ENCODE measurements at regions of chr3 and their contacts with region 1.

Region 1: DNA sequence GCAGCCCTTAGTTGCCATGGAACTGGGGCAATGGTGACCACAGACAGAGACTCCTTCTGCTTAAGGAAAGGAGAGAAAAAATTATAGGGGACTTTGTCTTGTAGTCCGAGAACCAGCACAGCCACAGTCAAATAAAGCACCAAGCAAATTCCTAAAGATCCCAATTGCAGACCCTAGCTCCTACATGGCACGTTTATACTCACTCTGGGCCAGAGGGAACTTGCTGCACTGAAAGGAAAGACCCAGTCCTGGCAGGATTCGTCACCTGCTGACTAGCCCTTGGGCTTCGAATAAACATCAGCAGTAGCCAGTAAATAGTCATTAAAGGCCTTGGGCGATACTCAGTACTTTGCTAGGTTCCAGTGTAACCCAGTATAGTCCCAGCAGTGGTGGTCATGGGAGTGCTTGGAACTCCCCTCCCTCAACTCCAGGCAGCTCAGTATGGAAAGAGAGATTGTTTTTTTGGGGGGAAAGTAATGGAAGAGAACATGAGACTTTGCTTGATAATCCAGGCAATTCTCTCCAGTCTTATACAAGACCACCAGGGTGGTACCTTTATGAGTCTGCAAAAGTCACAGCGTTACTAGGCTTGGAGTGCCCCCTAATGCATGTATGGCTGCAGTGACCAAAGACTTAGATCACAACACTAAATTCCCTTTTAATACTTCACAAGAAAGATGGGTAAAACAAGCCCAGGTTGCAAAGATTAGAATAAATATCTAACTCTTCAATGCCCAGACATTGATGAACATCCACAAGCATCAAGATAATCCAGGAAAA is 66.4 kb upstream of the AGTR1 start:
- DNase-seq: peak; percentile 14
- H3K4me3 ChIP-seq: no peak overlapping the region
- H3K27ac ChIP-seq: no peak overlapping the region
- H3K4me1 ChIP-seq: no peaks in the 10 kb centered on the region
- H3K27me3 ChIP-seq: no peaks in the 10 kb centered on the region
- CTCF ChIP-seq: peak; percentile 15 to 28
- POLR2A ChIP-seq: no peak

Region 2: DNA sequence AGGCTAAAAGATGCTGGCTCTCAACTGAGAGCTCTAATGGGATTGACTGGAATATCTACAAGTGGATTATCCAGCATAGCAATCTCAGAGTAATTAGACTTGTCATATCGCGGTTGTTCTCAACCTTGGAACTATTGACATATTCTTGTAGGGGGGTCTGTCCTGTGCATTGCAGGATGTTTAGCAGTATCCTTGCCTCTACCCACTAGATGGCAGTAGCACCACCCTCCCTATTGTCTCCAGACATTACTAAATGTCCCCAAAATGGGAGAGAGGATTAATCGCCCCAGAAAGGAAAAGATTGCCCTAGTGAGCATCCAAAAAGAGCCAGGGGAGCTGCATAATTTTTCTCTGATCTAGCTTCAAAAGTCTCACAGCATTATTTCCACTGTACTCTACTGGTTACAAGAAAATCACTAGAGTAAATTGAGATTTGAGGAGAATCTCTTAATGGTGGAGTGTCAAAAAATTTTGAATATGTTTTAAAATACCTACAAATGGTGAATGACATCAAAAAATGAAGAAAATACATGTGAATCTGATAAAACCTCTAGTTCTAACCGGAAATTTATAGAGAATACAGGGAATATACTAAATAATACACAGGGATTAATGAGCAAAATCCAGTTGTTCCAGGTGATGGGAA is 321.8 kb before region 1 on chr3:
- CTCF ChIA-PET with region 1: interaction called, 3 read pairs
- POLR2A ChIA-PET with region 1: no interaction called
- dilution Hi-C with region 1: no loop called
- intact Hi-C with region 1: loop called (anchors 1 kb)
- DNase-seq: peak; percentile 36
- H3K4me3 ChIP-seq: no peak overlapping the region
- H3K27ac ChIP-seq: no peak overlapping the region
- H3K4me1 ChIP-seq: no peaks in the 10 kb centered on the region
- H3K27me3 ChIP-seq: no peaks in the 10 kb centered on the region
- CTCF ChIP-seq: peak; percentile 48 to 72
- POLR2A ChIP-seq: no peak

Region 3: DNA sequence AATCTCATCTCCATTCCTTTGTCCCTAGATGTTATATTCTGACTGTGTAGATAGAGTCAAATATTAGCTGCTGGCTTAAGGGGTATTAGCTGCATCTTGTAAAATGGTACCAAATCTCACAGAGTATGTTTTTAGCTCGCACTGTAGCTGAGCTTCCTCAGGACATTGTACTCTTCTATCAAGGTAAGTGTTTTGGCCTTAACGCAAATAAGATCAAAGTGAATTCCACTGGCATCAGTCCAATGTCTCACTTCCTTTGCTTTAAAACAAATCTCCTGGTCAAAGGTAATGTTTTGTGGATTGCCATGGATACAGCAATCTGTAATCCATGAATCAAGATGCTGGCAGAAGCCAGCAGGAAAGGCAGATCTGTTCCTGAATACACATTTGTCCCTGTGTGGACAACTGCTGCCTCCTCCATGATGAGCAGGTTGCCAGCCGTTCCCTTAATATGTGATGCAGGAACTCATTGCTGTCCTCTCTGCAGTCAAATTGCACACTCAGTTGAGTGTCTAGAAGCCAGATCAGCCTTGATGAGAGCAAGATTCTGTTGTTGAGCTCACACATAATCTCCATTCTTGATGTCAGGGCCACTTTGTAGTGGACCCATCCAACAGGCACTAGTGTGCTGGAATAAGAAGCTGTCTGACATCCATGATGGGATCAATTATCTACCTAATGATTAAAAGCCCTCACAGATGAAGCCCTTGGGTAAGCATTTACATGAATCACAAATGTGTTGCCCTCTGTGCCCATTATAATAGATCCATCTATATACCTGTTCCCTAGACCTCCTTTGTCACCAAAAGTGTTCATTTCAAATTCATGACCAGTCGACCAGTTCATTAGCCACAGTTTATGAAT is 30.2 kb before region 1 on chr3:
- CTCF ChIA-PET with region 1: no interaction called
- POLR2A ChIA-PET with region 1: no interaction called
- dilution Hi-C with region 1: no loop called
- intact Hi-C with region 1: no loop called
- DNase-seq: no peak
- H3K4me3 ChIP-seq: no peak overlapping the region
- H3K27ac ChIP-seq: no peak overlapping the region
- H3K4me1 ChIP-seq: no peaks in the 10 kb centered on the region
- H3K27me3 ChIP-seq: no peaks in the 10 kb centered on the region
- CTCF ChIP-seq: no peak
- POLR2A ChIP-seq: no peak

Region 4: DNA sequence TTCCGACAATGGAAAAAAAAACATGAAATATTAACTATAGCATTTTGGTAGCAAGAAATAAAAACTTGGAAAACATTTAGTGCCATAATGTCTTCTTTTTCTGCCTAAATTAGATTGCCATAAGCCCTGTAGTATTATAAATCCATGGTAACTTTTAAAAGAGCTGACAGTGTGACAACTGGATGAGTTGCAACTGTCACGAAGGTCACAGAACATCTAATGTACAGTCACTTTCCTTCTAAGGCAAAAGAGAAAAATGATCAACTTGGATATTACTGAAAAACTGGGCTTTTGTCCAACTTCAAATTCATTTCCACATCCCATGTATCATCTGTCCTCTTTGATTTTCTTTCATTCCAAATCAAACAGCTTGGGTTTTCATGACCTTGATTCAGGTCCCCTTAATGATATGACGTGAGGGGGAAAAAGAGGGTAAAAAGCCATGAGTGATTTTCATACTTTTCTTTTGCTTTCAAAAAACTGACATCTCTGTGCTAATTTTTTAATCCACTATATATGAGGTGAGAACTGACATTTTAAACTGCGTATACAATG is 196.9 kb after region 1 on chr3:
- CTCF ChIA-PET with region 1: no interaction called
- POLR2A ChIA-PET with region 1: no interaction called
- dilution Hi-C with region 1: no loop called
- intact Hi-C with region 1: no loop called
- DNase-seq: no peak
- H3K4me3 ChIP-seq: no peak overlapping the region
- H3K27ac ChIP-seq: no peak overlapping the region
- H3K4me1 ChIP-seq: no peaks in the 10 kb centered on the region
- H3K27me3 ChIP-seq: peaks cover 3 to 20% of the 10 kb centered on the region in 2 experiments
- CTCF ChIP-seq: no peak
- POLR2A ChIP-seq: no peak